ENCODE measurements at regions of chr1 and their contacts with region 1.

Region 1: GRCh38 chr1:168342572-168343280 is 62.0 kb downstream of the TBX19 start:
- DNase-seq: peak; percentile 94
- H3K4me3 ChIP-seq: peak overlapping the region; percentile 36
- H3K27ac ChIP-seq: no peak overlapping the region
- H3K4me1 ChIP-seq: peaks cover 14% of the 10 kb centered on the region
- H3K27me3 ChIP-seq: no peaks in the 10 kb centered on the region

Region 2: GRCh38 chr1:168585191-168585590 is 242.5 kb after region 1 on chr1:
- in situ Hi-C with region 1: loop called (anchors 10 kb)
- DNase-seq: peak; percentile 87
- H3K4me3 ChIP-seq: 0 out of 2 replicates have a peak overlapping the region, but pooled peaks have one; percentile 6
- H3K27ac ChIP-seq: no peak overlapping the region
- H3K4me1 ChIP-seq: peaks cover 33% of the 10 kb centered on the region
- H3K27me3 ChIP-seq: no peaks in the 10 kb centered on the region

Region 3: DNA sequence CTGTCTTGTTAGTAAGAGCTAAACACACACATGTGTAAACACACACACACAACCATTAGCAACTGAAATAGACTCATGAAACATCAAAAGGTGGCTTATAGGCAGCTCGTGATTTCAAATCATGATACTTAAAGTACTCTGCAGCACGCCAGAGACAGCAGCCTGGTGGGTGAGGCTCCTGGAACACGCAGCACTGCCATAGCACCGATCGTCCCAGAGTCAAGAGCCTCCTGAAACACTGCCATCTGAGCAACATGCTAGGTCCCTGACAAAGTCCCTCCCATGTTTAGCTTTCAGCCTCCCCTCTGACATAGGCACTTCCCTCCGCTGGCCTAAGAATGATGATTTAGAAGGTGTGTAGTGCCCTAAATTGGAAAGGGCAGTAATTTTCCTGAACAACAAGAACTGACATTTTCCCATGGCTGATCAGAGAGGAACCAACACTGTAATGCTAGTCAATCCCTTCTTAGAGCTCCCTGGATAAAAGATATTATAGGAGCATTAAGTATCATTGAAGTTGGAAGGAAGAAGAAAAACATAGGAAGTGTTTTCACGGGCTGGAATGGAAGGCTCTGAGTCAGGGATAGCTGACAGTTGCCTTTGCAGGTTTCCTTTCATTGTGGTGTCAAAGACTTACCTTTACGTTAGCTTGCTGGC is 400.4 kb after region 1 on chr1:
- in situ Hi-C with region 1: no loop called
- DNase-seq: no peak
- H3K4me3 ChIP-seq: no peak overlapping the region
- H3K27ac ChIP-seq: no peak overlapping the region
- H3K4me1 ChIP-seq: no peaks in the 10 kb centered on the region
- H3K27me3 ChIP-seq: no peaks in the 10 kb centered on the region

Region 4: GRCh38 chr1:169348383-169349036 is 1005.8 kb after region 1 on chr1:
- in situ Hi-C with region 1: loop called (anchors 25 kb)
- DNase-seq: peak; percentile 71
- H3K4me3 ChIP-seq: no peak overlapping the region
- H3K27ac ChIP-seq: no peak overlapping the region
- H3K4me1 ChIP-seq: no peaks in the 10 kb centered on the region
- H3K27me3 ChIP-seq: no peaks in the 10 kb centered on the region

Measured in GM23248 (cell line).